Activated B cell treated with CpG ODN at 0.5 μM for 24 hours (primary cell): ENCODE measurements at regions of chr19 and their contacts with region 1.

Region 1: DNA sequence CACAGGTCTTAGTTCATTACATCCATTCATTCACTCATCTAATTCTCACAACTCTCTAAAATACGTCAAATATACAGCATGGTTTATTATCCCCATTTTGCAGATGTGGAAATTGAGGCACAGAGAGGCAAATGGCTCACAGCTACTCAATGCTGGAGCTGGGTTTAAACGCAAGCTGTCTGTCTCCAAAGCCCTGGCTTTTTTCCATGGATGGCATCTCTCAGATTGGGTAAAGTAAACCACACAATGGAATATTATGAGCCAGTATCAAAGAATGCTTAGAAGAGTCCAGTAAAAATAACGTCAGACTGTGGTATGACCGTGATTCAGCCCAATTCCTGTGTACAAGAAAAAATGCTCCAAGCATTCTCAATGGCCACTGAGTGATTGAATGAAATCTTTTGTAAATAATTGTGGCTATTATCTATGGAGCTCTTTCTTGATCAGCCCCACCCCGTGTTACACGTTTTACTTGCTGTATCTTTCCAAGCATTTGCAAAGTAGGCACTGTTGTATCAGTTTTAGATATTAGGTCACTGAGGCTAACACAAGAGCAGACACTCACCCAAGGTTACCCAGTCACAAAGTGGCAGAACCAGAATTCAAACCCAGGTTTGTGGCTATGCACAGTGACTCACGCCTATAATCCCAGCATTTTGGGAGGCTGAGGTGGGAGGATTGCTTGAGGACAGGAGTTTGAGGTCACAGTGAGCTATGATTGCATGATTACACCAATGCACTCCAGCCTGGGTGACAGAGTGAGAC is 5.5 kb upstream of the ACP7 start:
- DNase-seq: no peak
- ATAC-seq: no peak
- H3K4me3 Mint-ChIP-seq: no peak overlapping the region
- H3K27ac Mint-ChIP-seq: no peak overlapping the region
- H3K4me1 Mint-ChIP-seq: peaks cover 8% of the 10 kb centered on the region
- H3K27me3 Mint-ChIP-seq: peaks cover 37% of the 10 kb centered on the region
- CTCF ChIP-seq: no peak

Region 2: GRCh38 chr19:39661565-39661964 is 582.9 kb after region 1 on chr19:
- CTCF ChIA-PET with region 1: no interaction called
- POLR2A ChIA-PET with region 1: interaction called, 10 read pairs
- intact Hi-C with region 1: no loop called
- DNase-seq: no peak
- ATAC-seq: no peak
- H3K4me3 Mint-ChIP-seq: no peak overlapping the region
- H3K27ac Mint-ChIP-seq: no peak overlapping the region
- H3K4me1 Mint-ChIP-seq: no peaks in the 10 kb centered on the region
- H3K27me3 Mint-ChIP-seq: peaks cover 42% of the 10 kb centered on the region
- CTCF ChIP-seq: no peak